CD8-positive, alpha-beta memory T cell (primary cell): ENCODE measurements at regions of chr5 and their contacts with region 1.

Region 1: GRCh38 chr5:115634343-115635132 is 8.7 kb upstream of the TMED7 start:
- DNase-seq: peak; percentile 65 to 85 (median 75)
- H3K4me3 ChIP-seq: no peak overlapping the region
- H3K4me3 Mint-ChIP-seq: peak overlapping the region; percentile 41 to 89 (median 75)
- H3K27ac ChIP-seq: no peak overlapping the region
- H3K27ac Mint-ChIP-seq: peak overlapping the region in 5 of 8 donors; percentile 35 to 79 (median 71)
- H3K4me1 ChIP-seq: peaks cover 5% of the 10 kb centered on the region
- H3K4me1 Mint-ChIP-seq: peaks cover 6 to 7% (median 6%) of the 10 kb centered on the region in 3 donors
- H3K27me3 ChIP-seq: no peaks in the 10 kb centered on the region
- H3K27me3 Mint-ChIP-seq: peaks cover 0 to 5% of the 10 kb centered on the region in 2 donors

Region 2: DNA sequence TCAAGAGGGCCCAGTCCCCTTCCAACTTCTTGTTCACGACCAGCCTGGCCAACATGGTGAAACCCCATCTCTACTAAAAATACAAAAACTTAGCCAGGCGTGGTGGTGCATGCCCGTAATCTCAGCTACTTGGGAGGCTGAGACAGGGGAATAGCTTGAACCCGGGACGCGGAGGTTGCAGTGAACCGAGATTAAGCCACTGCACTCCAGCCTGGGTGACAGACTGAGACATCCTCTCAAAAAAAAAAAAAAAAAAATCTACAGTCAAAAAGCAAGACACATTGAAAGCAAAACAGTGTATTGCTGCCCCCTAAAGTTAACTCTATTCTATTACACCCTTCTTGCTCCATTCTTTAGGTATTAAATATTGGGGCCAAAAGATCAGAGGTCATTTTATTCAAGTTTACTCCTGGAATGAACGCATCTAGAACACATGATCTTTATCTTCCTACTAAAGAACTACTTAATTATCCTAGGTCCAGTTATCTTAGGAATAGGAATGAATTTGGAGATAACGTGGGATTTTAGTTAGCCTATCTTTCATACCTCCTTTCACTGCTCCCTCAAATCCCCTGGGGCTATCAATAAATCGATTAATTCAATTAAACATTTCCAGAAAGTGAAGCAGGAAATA is 204.5 kb after region 1 on chr5:
- CTCF ChIA-PET with region 1: interaction called, 12 read pairs
- POLR2A ChIA-PET with region 1: no interaction called
- DNase-seq: peak in 4 of 5 donors; percentile 34 to 67 (median 63)
- H3K4me3 ChIP-seq: peak overlapping the region; percentile 22
- H3K4me3 Mint-ChIP-seq: peak overlapping the region; percentile 98 to 100 (median 99)
- H3K27ac ChIP-seq: no peak overlapping the region
- H3K27ac Mint-ChIP-seq: peak overlapping the region; percentile 52 to 97 (median 91)
- H3K4me1 ChIP-seq: peaks cover 39% of the 10 kb centered on the region
- H3K4me1 Mint-ChIP-seq: peaks cover 58 to 68% (median 67%) of the 10 kb centered on the region in 3 donors
- H3K27me3 ChIP-seq: no peaks in the 10 kb centered on the region
- H3K27me3 Mint-ChIP-seq: no peaks in the 10 kb centered on the region

Region 3: GRCh38 chr5:116068028-116068632 is 433.6 kb after region 1 on chr5:
- CTCF ChIA-PET with region 1: interaction called, 18 read pairs
- POLR2A ChIA-PET with region 1: no interaction called
- DNase-seq: peak in 3 of 5 donors; percentile 17 to 39 (median 23)
- H3K4me3 ChIP-seq: no peak overlapping the region
- H3K4me3 Mint-ChIP-seq: no peak overlapping the region
- H3K27ac ChIP-seq: no peak overlapping the region
- H3K27ac Mint-ChIP-seq: no peak overlapping the region
- H3K4me1 ChIP-seq: no peaks in the 10 kb centered on the region
- H3K4me1 Mint-ChIP-seq: peaks cover 0 to 4% (median 0%) of the 10 kb centered on the region in 3 donors
- H3K27me3 ChIP-seq: no peaks in the 10 kb centered on the region
- H3K27me3 Mint-ChIP-seq: peaks cover 2 to 46% of the 10 kb centered on the region in 2 donors